Ascending aorta (tissue), 2 donors: ENCODE measurements at regions of chr9 and their contacts with region 1.

Region 1: DNA sequence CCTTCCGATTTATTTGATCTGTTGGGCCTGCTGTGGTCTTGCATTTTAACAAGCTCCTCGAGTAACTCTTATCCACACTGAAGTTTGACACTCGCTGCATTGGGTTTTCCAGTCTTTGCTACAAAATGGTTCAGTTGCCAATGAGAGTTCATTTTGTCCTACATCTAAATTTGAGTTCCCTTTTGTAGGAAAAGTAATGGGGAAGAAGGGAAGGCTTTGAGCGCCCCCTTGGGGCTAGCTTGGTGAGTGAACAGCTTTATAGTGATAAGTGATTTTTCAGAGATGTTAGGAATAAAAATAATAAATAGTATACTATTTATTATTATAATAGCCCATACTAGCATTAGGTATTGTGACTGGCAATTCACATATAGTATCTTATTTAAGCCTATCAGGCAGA is 89.9 kb upstream of the GNAQ start:
- DNase-seq: peak in 1 of 2 donors; percentile 73
- H3K4me3 ChIP-seq: no peak overlapping the region
- H3K27ac ChIP-seq: no peak overlapping the region
- H3K4me1 ChIP-seq: no peaks in the 10 kb centered on the region
- H3K27me3 ChIP-seq: no peaks in the 10 kb centered on the region
- CTCF ChIP-seq: peak in 2 of 3 experiments; percentile 24 to 44

Region 2: GRCh38 chr9:77433675-77434445 is 687.6 kb before region 1 on chr9:
- intact Hi-C with region 1: loop called (anchors 5 kb)
- DNase-seq: peak in 1 of 2 donors; percentile 76
- H3K4me3 ChIP-seq: no peak overlapping the region
- H3K27ac ChIP-seq: no peak overlapping the region
- H3K4me1 ChIP-seq: no peaks in the 10 kb centered on the region
- H3K27me3 ChIP-seq: no peaks in the 10 kb centered on the region
- CTCF ChIP-seq: peak; percentile 65 to 93 (median 93)